ENCODE measurements at regions of chr10 and their contacts with region 1.

Region 1: GRCh38 chr10:12381536-12382156 is 32.3 kb downstream of the CAMK1D start:
- DNase-seq: no peak
- H3K4me3 Mint-ChIP-seq: no peak overlapping the region
- H3K27ac Mint-ChIP-seq: peak overlapping the region; percentile 27
- H3K4me1 Mint-ChIP-seq: no peaks in the 10 kb centered on the region
- H3K27me3 Mint-ChIP-seq: peaks cover 5% of the 10 kb centered on the region

Region 2: GRCh38 chr10:11949152-11949551 is 432.5 kb before region 1 on chr10:
- intact Hi-C with region 1: no loop called
- DNase-seq: no peak
- H3K4me3 Mint-ChIP-seq: no peak overlapping the region
- H3K27ac Mint-ChIP-seq: peak overlapping the region; percentile 10
- H3K4me1 Mint-ChIP-seq: peaks cover 12% of the 10 kb centered on the region
- H3K27me3 Mint-ChIP-seq: no peaks in the 10 kb centered on the region

Region 3: DNA sequence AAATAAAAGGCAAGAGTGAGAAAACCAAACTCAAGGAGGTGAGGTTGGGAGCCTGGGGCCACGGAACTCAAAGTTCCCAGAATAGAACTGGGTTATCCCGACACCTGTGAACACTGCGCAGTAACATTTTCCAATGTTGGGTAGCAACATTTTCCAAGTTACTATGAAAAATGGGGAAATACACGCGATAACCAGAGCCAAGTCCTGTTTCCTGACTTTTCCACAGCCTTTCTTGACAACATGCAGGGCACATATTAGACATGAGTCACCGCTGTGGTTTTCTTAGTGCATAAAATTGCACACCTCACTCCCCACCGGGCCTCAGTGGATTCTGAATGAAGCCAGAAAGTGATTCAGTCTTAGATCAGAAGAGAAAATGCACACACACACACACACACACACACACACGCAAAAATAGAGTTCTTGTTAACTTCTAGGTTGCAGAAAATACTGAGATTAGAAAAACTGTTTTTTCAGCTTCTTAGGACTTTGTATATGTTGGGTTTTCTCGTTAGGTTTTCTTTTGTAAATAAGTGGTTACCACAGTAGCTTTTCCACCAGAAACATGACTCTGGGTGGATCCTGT is 37.7 kb after region 1 on chr10:
- intact Hi-C with region 1: loop called (anchors 2 kb)
- DNase-seq: peak; percentile 25
- H3K4me3 Mint-ChIP-seq: peak overlapping the region; percentile 5
- H3K27ac Mint-ChIP-seq: peak overlapping the region; percentile 58
- H3K4me1 Mint-ChIP-seq: peaks cover 18% of the 10 kb centered on the region
- H3K27me3 Mint-ChIP-seq: peaks cover under 1% of the 10 kb centered on the region

Measured in activated T-helper 1 cell treated with anti-CD3 and anti-CD28 coated beads, Interleukin-12 subunit alpha, Interleukin-12 subunit beta, Interleukin-2, Interleukin-4 antibody, amounts not matched to agents 30 ng/mL and 10 ng/mL and 1 ng/mL, durations not matched to agents 14 hours and 24 hours and 36 hours (primary cell).